ENCODE measurements at regions of chr2 and their contacts with region 1.

Region 1: DNA sequence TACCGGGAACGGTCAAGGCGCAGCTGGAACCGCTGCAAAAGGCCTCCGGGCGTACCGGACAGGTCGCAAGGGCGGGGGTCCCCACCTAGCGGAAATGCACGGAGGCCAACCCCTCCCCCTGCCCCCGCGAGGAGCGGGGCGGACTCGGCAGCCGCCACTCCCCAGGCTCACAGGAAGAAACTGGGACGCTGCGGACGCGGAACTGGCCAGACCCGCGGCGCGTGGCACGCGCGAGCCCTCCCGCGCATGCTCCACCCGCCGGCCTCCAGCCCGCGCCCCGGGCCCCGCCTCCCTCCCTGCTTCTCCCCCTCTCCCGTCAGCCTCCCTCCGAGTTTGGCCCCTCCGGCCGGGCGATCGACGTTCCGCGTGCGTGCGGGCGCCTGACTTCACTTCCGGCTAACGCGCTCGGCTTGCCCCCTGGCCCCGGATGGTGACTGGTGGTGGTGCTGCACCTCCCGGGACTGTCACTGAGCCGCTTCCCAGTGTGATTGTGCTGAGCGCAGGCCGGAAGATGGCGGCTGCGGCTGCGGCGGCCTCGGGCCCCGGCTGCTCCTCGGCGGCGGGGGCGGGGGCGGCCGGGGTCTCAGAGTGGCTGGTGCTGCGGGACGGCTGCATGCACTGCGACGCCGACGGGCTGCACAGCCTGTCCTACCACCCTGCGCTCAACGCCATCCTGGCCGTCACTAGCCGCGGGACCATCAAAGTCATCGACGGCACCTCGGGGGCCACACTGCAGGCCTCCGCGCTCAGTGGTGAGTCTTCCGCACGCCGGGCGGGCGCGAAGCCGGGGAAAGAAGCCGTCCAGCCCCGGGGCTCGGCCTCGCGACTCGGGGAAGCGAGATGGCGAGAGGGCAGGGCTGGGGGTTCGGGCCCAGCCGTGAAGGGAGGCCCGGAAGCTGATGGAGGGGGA is at the start of gene BIRC6:
- DNase-seq: peak; percentile 95 to 100 (median 99)

Region 2: DNA sequence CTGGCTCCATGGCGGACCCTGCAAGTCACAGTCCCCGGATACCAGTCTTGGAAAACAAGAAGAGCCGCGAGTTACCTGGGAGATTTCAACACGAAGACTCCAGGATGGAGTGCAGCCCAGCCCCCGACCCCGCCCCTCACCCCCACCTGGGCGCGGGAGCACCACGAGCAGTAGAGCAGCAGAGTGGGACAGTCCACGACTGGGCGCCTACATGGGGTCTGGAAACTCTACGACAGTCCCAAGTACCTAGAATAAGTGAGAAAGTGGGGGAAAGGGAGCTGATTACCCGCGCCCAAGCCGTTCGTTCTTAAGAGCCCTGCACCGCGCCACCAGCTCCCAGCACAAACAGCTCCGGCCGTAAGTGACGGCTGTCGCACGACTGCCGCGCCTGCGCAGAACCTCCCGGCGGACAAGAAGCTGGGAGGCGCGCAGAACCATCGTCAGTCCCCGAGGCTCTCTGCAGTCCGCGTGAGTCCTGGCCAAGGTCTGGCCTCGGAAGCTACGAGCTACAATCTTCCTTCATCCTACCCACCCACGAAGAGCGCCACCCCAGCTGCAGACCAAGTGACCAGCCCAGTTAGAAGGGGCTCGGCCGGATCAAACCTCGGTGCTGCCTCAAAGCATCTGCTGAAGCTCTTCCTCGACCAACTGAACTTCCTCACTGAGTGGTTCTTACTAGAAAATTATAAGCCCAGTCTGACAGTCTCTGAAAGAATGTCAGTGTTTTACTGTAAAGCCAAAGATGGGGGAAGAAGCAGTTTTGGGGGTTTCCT is 317.4 kb before region 1 on chr2 and contains the start of gene DPY30:
- intact Hi-C with region 1: loop called (anchors 10 kb)
- DNase-seq: peak; percentile 87 to 96 (median 93)

Region 3: GRCh38 chr2:32168513-32168912 is 188.5 kb before region 1 on chr2:
- intact Hi-C with region 1: loop called (anchors 5 kb)
- DNase-seq: no peak

Region 4: GRCh38 chr2:32264422-32265105 is 92.4 kb before region 1 on chr2 and contains the start of gene NLRC4:
- intact Hi-C with region 1: no loop called
- DNase-seq: peak in 1 of 42 donors; percentile 33

Region 5: GRCh38 chr2:32277674-32278482 is 79.1 kb before region 1 on chr2 and contains the start of gene YIPF4:
- intact Hi-C with region 1: loop called (anchors 5 kb)
- DNase-seq: peak; percentile 79 to 96 (median 88)